A549 (cell line): ENCODE measurements at regions of chr2 and their contacts with region 1.

Region 1: DNA sequence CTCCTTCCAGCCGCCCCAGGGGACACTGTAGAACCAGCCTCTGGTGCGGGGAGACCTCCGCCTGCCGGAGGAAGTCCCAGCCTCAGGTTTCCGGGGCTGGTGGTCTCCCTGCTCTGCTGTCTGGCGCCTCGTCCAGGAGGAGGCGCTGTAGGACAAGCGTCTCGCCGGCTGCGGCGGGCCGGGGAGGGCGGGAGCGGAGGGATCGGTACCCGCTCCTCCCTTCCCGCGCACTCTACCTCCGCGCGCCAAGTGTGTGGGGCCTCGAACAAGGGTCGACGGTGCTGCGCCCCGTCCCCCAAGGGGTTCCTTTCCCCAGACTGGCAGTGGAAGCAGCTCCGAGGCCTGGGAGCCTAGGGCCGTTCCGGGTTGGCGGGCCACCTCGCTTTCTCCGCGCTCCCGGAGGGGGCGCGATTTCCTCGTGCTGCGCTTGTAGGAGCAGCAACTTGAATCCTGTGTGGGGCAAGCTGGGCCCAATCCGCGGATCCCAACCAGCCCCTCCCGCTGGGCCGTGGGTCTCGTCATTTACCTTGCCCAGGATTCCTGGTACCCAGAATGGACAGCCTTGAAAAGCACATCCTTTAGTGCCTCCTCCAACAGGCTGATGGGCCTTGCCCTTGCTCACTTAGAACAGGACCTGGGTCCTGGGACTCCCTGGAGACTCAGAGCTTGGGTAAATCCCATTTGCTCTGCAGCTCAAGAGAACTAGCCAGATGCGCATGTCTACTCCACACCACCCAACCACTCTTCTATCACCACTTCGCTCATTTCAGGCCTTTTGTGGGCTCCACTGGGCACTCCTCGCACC is 10.6 kb upstream of the HOXD4 start:
- DNase-seq: peak; percentile 84 to 85
- ATAC-seq: peak; percentile 89 to 96
- H3K4me3 ChIP-seq: peak overlapping the region; percentile 49
- H3K27ac ChIP-seq: peak overlapping the region; percentile 87 to 99
- H3K4me1 ChIP-seq: no peaks in the 10 kb centered on the region
- CTCF ChIP-seq: peak; percentile 100
- EP300 ChIP-seq: no peak
- POLR2A ChIP-seq: peak; percentile 32; the same call in 1 of the 2 replicates
- RAD21 ChIP-seq: peak; percentile 90 to 100

Region 2: GRCh38 chr2:176161819-176162626 is 21.3 kb after region 1 on chr2:
- CTCF ChIA-PET with region 1: interaction called, 12 read pairs
- POLR2A ChIA-PET with region 1: no interaction called
- DNase-seq: no peak
- ATAC-seq: no peak; a peak in 1 of 6 replicates
- H3K4me3 ChIP-seq: no peak overlapping the region
- H3K27ac ChIP-seq: no peak overlapping the region
- H3K4me1 ChIP-seq: no peaks in the 10 kb centered on the region
- CTCF ChIP-seq: no peak
- EP300 ChIP-seq: no peak
- POLR2A ChIP-seq: no peak
- RAD21 ChIP-seq: no peak

Region 3: GRCh38 chr2:176246341-176246740 is 105.6 kb after region 1 on chr2:
- CTCF ChIA-PET with region 1: interaction called, 12 read pairs
- POLR2A ChIA-PET with region 1: no interaction called
- DNase-seq: no peak
- ATAC-seq: peak; percentile 13 to 28; a peak in 1 of 6 replicates
- H3K4me3 ChIP-seq: no peak overlapping the region
- H3K27ac ChIP-seq: no peak overlapping the region
- H3K4me1 ChIP-seq: no peaks in the 10 kb centered on the region
- CTCF ChIP-seq: no peak
- EP300 ChIP-seq: no peak
- POLR2A ChIP-seq: no peak
- RAD21 ChIP-seq: no peak

Region 4: DNA sequence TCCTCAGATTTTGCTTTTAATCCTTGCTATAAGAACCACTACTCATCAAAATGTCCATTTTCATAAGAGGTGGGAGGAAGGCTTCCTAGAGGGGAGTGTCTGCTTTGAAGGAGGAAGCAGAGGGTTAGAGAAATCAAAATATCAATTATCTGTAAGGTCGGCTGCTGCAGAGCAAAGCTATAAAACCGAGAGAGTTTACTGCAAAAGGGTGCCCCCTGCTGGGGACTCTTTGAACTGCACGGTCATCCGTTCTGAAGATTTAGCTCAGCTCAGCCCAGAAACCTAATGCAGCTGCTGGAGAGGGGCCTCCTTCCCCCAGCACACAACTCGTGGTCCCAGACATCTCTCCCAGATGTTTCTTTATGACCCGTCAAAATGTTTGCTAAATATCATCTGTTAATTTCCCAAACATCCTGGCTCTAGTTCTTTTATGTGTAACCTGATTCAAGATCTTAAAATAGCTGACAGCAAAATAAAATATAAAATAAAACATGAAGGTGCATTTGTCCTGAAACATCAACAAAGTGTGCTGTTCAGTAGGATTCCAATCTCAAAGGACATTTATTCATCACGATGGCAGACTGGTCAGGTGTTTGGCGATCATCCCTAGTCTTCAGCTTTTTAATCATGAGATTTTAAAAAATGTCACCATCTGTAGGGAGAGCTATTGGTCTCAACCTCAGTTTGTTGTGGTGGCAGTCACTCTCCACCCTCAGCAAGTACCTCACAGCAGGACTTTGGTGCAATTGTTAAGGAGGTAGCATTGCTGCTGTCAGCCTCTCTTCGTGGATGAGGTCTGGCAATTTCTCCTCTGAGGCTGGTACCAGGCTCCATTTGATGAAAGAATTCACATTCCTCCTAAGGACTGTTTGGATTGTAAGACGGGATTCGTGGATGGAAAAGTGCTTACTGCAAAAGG is 314.4 kb after region 1 on chr2:
- CTCF ChIA-PET with region 1: interaction called, 181 read pairs
- POLR2A ChIA-PET with region 1: interaction called, 7 read pairs
- DNase-seq: peak; percentile 31 to 59
- ATAC-seq: peak; percentile 87 to 93
- H3K4me3 ChIP-seq: no peak overlapping the region
- H3K27ac ChIP-seq: no peak overlapping the region
- H3K4me1 ChIP-seq: no peaks in the 10 kb centered on the region
- CTCF ChIP-seq: peak; percentile 90
- EP300 ChIP-seq: no peak
- POLR2A ChIP-seq: no peak
- RAD21 ChIP-seq: peak; percentile 83 to 86

Region 5: GRCh38 chr2:176565641-176566323 is 425.1 kb after region 1 on chr2:
- CTCF ChIA-PET with region 1: interaction called, 28 read pairs
- POLR2A ChIA-PET with region 1: no interaction called
- DNase-seq: no peak
- ATAC-seq: no peak
- H3K4me3 ChIP-seq: no peak overlapping the region
- H3K27ac ChIP-seq: no peak overlapping the region
- H3K4me1 ChIP-seq: peaks cover 25% of the 10 kb centered on the region
- CTCF ChIP-seq: no peak
- EP300 ChIP-seq: no peak
- POLR2A ChIP-seq: no peak
- RAD21 ChIP-seq: no peak

Region 6: GRCh38 chr2:176638167-176639015 is 497.7 kb after region 1 on chr2:
- CTCF ChIA-PET with region 1: interaction called, 216 read pairs
- POLR2A ChIA-PET with region 1: interaction called, 4 read pairs
- DNase-seq: peak; percentile 68 to 69
- ATAC-seq: peak; percentile 92 to 96
- H3K4me3 ChIP-seq: peak overlapping the region; percentile 66
- H3K27ac ChIP-seq: peak overlapping the region; percentile 88 to 95
- H3K4me1 ChIP-seq: peaks cover 11% of the 10 kb centered on the region; the same call in 2 of the 3 replicates
- CTCF ChIP-seq: peak; percentile 96
- EP300 ChIP-seq: no peak
- POLR2A ChIP-seq: no peak
- RAD21 ChIP-seq: peak; percentile 87 to 98

Region 7: DNA sequence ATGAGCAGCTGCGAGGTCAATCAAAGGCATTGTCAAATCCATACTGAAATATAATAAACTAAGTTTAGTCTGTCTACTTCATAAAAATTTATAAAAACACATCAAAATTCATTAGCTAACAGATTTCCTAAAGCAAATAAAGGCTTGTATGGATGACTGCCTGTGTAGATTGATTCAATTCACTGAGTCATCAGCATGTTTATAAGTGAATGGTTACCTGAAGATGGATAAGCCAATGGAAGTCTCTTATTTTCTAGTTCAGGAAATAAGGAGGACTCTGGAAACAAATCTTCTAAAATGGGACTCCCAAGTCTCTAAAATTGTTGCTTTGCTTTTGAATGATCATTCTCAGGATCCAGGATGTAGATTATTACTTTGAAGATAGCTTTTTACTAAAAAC is 1014.9 kb after region 1 on chr2:
- CTCF ChIA-PET with region 1: interaction called, 10 read pairs
- POLR2A ChIA-PET with region 1: no interaction called
- DNase-seq: no peak
- ATAC-seq: no peak
- H3K4me3 ChIP-seq: no peak overlapping the region
- H3K27ac ChIP-seq: no peak overlapping the region
- H3K4me1 ChIP-seq: no peaks in the 10 kb centered on the region
- CTCF ChIP-seq: no peak
- EP300 ChIP-seq: no peak
- POLR2A ChIP-seq: no peak
- RAD21 ChIP-seq: no peak